A673 (cell line): ENCODE measurements at regions of chr19 and their contacts with region 1.

Region 1: DNA sequence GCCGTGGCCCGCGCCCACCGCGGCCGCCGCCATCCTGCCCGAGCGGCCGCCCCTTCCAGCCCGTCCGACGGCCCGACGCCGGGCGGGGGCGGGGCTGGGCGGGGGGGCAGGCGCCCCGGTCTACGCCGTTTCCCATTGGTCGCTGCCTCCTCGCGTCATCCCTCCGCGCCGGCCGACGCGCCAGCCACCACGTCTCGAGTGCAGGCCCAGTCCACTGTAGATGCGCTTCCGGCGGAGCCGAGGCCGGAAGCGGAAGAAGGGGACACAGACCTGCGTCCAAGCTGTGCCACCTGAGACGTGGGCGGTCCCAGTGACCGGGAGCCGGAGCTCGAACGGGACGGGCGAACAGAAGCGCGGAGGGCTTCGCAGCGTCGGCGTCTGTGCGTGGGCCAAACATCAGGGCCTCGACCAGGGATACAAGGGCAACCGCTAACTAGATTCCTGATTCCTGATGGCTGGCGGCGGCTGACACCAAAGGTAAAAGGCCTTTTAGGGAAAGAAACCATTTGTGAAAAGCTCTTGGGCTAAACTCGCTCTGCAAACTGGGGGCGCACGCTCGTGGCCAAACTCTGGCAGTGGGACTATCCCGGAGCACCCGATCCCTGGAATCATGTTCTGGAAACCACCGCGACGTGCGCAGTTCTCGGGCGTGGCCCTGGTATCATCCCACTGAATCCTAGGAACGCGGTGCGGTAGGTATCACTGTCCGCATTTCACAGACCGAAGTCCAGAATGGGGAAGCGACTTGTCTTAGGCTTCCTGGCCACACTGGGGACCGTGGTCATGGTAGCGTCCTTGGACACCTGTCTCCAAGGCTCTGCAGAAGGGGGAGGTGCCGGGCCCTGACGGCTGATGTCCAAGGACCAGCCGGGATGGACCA is at the start of gene SLC35E1:
- DNase-seq: peak; percentile 97
- H3K4me3 ChIP-seq: peak within 1 kb of the TSS; percentile 86
- H3K27ac ChIP-seq: peak within 1 kb of the TSS; percentile 71
- H3K4me1 ChIP-seq: peaks cover 10% of the 10 kb centered on the region
- H3K27me3 ChIP-seq: no peaks in the 10 kb centered on the region
- CTCF ChIP-seq: no peak
- total RNA-seq, gene SLC35E1: 36.3 and 37.9 TPM in 2 replicates

Region 2: DNA sequence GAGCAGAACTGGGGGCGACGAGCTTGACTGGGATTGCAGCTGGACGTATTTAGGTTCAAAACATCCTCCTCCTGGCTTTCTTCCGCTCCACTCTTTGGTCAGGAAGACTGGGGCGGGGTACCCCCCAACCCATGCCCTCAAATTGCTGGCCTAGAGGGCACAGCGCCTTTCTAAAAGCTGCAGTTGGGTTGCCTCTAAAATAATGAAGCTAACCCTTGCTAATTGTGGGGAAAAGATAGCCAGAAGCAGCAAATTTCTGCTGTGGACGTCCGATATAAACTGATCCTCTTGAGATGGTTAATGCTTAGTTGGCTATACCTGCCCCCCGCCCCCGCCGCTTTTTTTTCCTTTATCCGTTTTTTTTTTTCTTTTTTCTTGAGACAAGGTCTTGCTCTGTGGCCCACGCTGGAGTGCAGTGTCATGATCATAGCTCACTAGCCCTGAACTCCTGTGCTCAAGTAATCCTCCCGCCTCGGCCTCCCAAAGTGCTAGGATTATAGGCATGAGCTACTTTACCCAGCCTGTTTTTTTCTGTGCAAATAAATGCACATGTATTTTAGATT is 29.6 kb before region 1 on chr19:
- CTCF ChIA-PET with region 1: no interaction called
- POLR2A ChIA-PET with region 1: interaction called, 17 read pairs
- intact Hi-C with region 1: no loop called
- DNase-seq: no peak
- H3K4me3 ChIP-seq: peak overlapping the region; percentile 96
- H3K27ac ChIP-seq: peak overlapping the region; percentile 92
- H3K4me1 ChIP-seq: peaks cover 17% of the 10 kb centered on the region
- H3K27me3 ChIP-seq: no peaks in the 10 kb centered on the region
- CTCF ChIP-seq: no peak

Region 3: GRCh38 chr19:16628183-16628983 is 55.8 kb after region 1 on chr19 and contains the start of gene MED26:
- CTCF ChIA-PET with region 1: no interaction called
- POLR2A ChIA-PET with region 1: no interaction called
- intact Hi-C with region 1: loop called (anchors 5 kb)
- DNase-seq: peak; percentile 96
- H3K4me3 ChIP-seq: peak within 1 kb of the TSS; percentile 100
- H3K27ac ChIP-seq: peak within 1 kb of the TSS; percentile 98
- H3K4me1 ChIP-seq: peaks cover 15% of the 10 kb centered on the region
- H3K27me3 ChIP-seq: no peaks in the 10 kb centered on the region
- CTCF ChIP-seq: no peak
- total RNA-seq, gene MED26: 13.4 and 15.6 TPM in 2 replicates